RWPE1 (cell line): ENCODE measurements at regions of chr16 and their contacts with region 1.

Region 1: GRCh38 chr16:3264137-3265036 is 8.0 kb upstream of the MEFV start:
- DNase-seq: peak; percentile 96
- H3K27ac ChIP-seq: peak overlapping the region; percentile 99
- CTCF ChIP-seq: no peak; the same call in 1 of the 2 replicates

Region 2: GRCh38 chr16:2816751-2817339 is 447.5 kb before region 1 on chr16 and contains the start of gene PRSS21:
- CTCF ChIA-PET with region 1: no interaction called
- POLR2A ChIA-PET with region 1: no interaction called
- DNase-seq: peak; percentile 25
- H3K27ac ChIP-seq: peak within 1 kb of the TSS; percentile 75
- CTCF ChIP-seq: peak; percentile 66

Region 3: DNA sequence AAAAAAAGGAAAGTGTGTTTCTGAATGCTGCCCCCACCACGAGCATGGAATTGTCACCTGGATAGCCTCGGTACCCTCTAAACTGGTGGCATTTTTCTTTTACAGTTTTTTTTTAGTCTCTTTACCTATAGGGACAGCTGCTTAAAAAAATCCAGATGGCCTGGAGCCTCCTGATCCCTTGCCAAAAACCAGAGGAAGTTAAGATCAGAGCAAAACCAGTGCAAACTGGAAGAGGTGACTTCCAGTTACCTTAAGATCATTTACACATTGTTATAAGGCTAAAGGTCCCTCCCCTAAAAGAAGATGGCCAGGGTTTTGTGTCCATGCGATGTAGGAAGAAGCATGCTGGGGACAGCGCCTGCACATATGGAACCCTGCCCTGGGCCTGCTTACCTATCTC is 11.4 kb before region 1 on chr16:
- CTCF ChIA-PET with region 1: interaction called, 3 read pairs
- POLR2A ChIA-PET with region 1: interaction called, 13 read pairs
- DNase-seq: no peak
- H3K27ac ChIP-seq: no peak overlapping the region
- CTCF ChIP-seq: no peak